Transverse colon (tissue), 4 donors: ENCODE measurements at regions of chr4 and their contacts with region 1.

Region 1: GRCh38 chr4:24584175-24584850 is at the start of gene DHX15:
- DNase-seq: peak; percentile 97
- H3K4me3 ChIP-seq: peak within 1 kb of the TSS; percentile 73 to 99 (median 94)
- H3K27ac ChIP-seq: peak within 1 kb of the TSS; percentile 92 to 99 (median 97)
- H3K4me1 ChIP-seq: peaks cover 18 to 40% (median 27%) of the 10 kb centered on the region in 4 donors
- H3K27me3 ChIP-seq: no peaks in the 10 kb centered on the region
- CTCF ChIP-seq: peak in 2 of 5 experiments; percentile 25 to 35
- EP300 ChIP-seq: no peak
- POLR2A ChIP-seq: peak; percentile 73
- total RNA-seq, gene DHX15: 118 to 203 (median 170) TPM

Region 2: DNA sequence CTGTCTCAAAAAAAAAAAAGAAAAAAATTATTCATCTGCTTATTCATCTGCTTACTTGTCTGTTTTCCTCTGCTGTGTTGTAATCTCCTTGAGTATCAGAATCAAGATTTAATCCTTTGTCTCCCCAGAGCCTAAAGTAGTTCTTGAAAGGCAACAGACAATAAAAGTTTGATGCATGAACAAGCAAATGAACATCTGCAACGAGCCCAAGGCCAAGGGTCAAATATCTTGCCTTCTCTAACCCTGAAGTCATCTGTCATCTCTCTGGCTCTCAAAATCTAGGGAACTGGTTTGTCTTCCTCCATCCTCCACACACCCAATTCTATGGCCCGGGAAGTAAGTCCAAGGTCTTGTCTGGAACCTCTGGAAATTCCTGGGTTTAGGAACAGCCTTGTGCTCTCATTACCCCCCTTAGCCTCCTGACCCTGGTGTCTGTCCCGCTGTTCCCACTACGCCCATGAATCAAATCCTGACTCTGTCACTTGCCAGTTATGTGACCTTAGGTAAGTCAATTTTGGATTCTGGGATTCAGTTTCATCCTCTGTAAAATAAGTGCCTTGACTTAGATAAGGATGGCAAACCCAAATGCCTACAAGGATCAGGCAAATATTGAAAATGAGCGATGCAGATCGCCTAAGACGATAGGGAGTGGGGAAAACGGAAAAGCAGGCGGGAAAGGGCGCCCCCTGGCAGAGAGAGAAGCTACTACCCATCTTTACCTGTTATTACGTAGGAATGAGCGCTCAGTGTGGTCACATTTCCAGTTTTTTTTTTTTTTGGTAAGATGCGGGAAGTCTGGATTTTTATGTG is 102.8 kb after region 1 on chr4:
- in situ Hi-C with region 1: loop called in 1 of 4 experiments (anchors 25 kb)
- intact Hi-C with region 1: no loop called
- DNase-seq: peak; percentile 66
- H3K4me3 ChIP-seq: no peak overlapping the region
- H3K27ac ChIP-seq: peak overlapping the region in 2 of 4 donors; percentile 7 to 52
- H3K4me1 ChIP-seq: no peaks in the 10 kb centered on the region
- H3K27me3 ChIP-seq: no peaks in the 10 kb centered on the region
- CTCF ChIP-seq: peak; percentile 48 to 79 (median 67)
- EP300 ChIP-seq: no peak
- POLR2A ChIP-seq: no peak

Region 3: DNA sequence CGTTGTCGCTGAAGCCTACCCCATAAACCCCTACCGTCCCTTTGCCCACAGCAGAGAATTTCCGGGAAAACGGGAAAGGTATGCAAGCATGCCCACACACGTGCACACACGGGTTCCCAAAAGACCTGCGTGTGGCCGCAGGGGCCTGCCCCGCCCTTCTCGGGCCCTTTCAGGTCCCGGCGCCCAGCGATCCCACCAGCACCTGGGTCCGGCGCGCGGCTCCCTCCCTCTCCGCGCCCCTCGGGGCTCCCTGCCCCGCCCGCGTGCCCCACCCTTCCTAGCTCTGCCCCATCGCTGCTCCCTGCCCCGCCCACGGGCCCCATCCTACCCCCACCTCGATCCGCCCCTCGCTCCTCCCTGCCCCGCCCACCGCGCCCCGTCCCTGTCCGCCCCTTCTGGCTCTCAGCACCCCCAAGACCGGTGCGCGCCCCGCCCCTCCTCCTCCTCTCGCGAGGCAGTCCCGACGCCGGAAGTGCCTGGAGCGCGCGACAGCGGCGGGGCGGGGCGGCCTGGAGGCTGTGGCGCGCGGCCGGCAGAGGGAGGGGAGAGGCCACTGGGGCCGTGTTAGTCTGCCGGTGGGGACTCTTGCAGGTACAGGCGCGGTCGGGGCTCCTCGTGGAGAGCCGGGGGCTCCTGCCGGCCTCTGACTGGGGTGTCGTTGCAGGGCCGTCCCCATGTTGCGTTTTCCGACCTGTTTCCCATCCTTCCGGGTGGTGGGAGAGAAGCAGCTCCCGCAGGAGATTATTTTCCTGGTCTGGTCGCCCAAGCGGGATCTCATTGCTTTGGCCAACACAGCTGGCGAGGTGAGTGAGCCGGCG is 792.6 kb after region 1 on chr4 and contains the start of gene ANAPC4:
- in situ Hi-C with region 1: no loop called
- intact Hi-C with region 1: loop called (anchors 10 kb)
- DNase-seq: peak; percentile 99
- H3K4me3 ChIP-seq: peak within 1 kb of the TSS; percentile 80 to 97 (median 92)
- H3K27ac ChIP-seq: peak within 1 kb of the TSS; percentile 81 to 88 (median 84)
- H3K4me1 ChIP-seq: peaks cover 0 to 18% (median 11%) of the 10 kb centered on the region in 4 donors
- H3K27me3 ChIP-seq: no peaks in the 10 kb centered on the region
- CTCF ChIP-seq: no peak
- EP300 ChIP-seq: no peak
- POLR2A ChIP-seq: peak; percentile 76
- total RNA-seq, gene ANAPC4: 27.7 to 48.0 (median 36.4) TPM